Activated CD4-positive, alpha-beta memory T cell treated with anti-CD3 and anti-CD28 coated beads, Interleukin-2, amount 10 ng/mL, durations not matched to agents 7 days and 5 days (primary cell): ENCODE measurements at regions of chr9 and their contacts with region 1.

Region 1: DNA sequence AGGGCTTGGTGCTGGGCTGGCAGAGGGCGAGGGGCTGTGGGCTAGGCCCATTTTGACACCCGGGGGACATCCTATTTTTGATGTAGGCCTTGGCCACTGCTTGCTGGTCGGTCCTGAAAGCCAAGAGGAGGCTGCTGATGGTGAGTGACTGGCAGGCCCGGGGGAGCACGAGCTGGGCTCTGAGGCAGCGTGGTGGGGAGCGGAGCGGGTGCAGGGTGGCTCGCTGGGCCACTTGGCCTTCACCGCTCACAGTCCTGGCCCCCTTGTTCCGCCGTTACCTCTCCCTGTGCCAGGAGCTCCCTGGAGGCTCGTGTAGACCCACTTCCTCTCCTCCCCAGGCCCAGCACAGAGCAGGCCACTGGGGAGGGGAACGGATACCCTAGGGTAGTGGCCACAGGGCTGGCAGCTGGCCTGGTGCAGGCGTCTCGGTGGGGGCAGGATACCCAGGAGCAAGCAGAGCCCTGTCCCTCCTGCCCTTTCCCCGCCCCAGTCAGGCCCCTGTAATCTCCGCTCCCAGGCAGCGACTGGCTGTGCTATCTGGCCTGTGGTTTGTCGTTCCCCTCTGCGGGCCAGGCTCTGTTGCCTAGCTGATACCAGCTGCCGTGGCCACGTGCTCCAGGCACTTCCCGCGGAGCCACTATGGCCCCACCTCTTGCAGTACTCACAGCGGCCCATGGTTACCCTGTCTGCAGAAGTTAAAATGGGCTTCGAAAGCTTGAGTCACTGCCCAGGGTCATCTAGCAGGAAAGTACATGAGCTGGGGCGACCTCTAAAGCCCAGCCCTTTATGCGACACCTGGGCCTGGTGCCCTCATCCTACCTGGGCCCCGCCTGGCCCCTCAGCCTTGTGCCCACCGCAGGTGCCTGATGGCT is 11.7 kb upstream of the DOLPP1 start:
- DNase-seq: peak; percentile 74
- H3K4me3 Mint-ChIP-seq: no peak overlapping the region
- H3K27ac Mint-ChIP-seq: peak overlapping the region; percentile 58
- H3K4me1 Mint-ChIP-seq: peaks cover 36% of the 10 kb centered on the region
- H3K27me3 Mint-ChIP-seq: no peaks in the 10 kb centered on the region

Region 2: DNA sequence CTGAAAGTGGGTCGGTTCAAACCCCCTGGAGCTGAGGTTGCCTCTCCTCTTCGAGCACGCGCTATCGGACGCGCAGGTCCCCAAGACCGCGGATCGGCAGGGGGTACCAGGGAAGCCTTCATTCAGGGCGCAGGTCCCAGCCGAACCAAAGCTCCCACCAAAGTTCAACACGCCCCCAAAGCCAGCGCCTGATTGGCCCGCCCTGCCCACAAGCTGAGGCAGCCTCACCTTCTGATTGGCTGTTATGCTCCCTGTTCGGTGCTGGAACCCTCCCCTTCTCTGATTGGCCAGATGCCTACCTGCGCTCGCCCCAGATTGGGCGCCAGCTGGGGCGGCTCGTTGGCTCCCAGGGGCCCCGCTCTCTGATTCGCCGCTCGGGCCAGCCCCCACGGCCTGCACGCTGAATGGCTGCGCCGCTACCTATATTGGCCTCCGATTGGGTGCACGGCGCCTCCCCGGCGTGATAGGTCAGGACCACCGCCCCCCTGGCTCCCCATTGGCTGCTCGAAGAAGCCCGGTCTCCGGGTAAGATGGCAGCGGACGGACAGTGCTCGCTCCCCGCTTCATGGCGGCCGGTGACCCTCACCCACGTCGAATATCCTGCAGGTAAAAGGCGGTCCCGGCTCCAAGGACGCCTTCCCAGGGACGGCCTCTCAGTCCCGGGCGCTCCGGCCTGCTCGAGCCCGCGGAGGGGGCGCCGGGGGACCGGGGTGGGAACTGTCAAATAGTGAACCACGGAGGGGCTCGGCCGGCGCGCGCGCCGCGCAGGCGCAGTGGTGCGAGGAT is 11.6 kb after region 1 on chr9 and contains the start of gene DOLPP1:
- CTCF ChIA-PET with region 1: no interaction called
- POLR2A ChIA-PET with region 1: interaction called, 25 read pairs
- DNase-seq: peak; percentile 99
- H3K4me3 Mint-ChIP-seq: peak within 1 kb of the TSS; percentile 87
- H3K27ac Mint-ChIP-seq: peak within 1 kb of the TSS; percentile 76
- H3K4me1 Mint-ChIP-seq: peaks cover 28% of the 10 kb centered on the region
- H3K27me3 Mint-ChIP-seq: no peaks in the 10 kb centered on the region
- total RNA-seq, gene DOLPP1: 12.9 to 16.3 TPM

Region 3: GRCh38 chr9:129237195-129237611 is 168.0 kb after region 1 on chr9:
- CTCF ChIA-PET with region 1: no interaction called
- POLR2A ChIA-PET with region 1: no interaction called
- DNase-seq: peak; percentile 43
- H3K4me3 Mint-ChIP-seq: peak overlapping the region; percentile 60
- H3K27ac Mint-ChIP-seq: peak overlapping the region; percentile 70
- H3K4me1 Mint-ChIP-seq: peaks cover 51% of the 10 kb centered on the region
- H3K27me3 Mint-ChIP-seq: no peaks in the 10 kb centered on the region